ENCODE measurements at regions of chr6 and their contacts with region 1.

Region 1: GRCh38 chr6:70221025-70221714 is 81.7 kb downstream of the COL9A1 start:
- DNase-seq: peak; percentile 12 to 15
- ATAC-seq: peak; percentile 34 to 49; a peak in 3 of 6 replicates
- H3K4me3 ChIP-seq: no peak overlapping the region
- H3K27ac ChIP-seq: no peak overlapping the region
- H3K4me1 ChIP-seq: no peaks in the 10 kb centered on the region
- CTCF ChIP-seq: peak; percentile 68
- EP300 ChIP-seq: no peak
- POLR2A ChIP-seq: no peak
- RAD21 ChIP-seq: peak; percentile 69 to 81

Region 2: GRCh38 chr6:70194421-70194820 is 26.7 kb before region 1 on chr6:
- CTCF ChIA-PET with region 1: no interaction called
- POLR2A ChIA-PET with region 1: no interaction called
- DNase-seq: no peak
- ATAC-seq: no peak
- H3K4me3 ChIP-seq: no peak overlapping the region
- H3K27ac ChIP-seq: no peak overlapping the region
- H3K4me1 ChIP-seq: no peaks in the 10 kb centered on the region
- CTCF ChIP-seq: no peak
- EP300 ChIP-seq: no peak
- POLR2A ChIP-seq: no peak
- RAD21 ChIP-seq: no peak

Region 3: GRCh38 chr6:70210462-70210861 is 10.7 kb before region 1 on chr6:
- CTCF ChIA-PET with region 1: interaction called, 16 read pairs
- POLR2A ChIA-PET with region 1: no interaction called
- DNase-seq: peak; percentile 6 to 16
- ATAC-seq: peak; percentile 66 to 71; a peak in 4 of 6 replicates
- H3K4me3 ChIP-seq: no peak overlapping the region
- H3K27ac ChIP-seq: no peak overlapping the region
- H3K4me1 ChIP-seq: no peaks in the 10 kb centered on the region
- CTCF ChIP-seq: peak; percentile 19; the same call in 1 of the 3 replicates
- EP300 ChIP-seq: no peak
- POLR2A ChIP-seq: no peak
- RAD21 ChIP-seq: 0 out of 5 replicates have a peak, but pooled peaks of 1 of the 2 experiments have one; percentile 5

Region 4: DNA sequence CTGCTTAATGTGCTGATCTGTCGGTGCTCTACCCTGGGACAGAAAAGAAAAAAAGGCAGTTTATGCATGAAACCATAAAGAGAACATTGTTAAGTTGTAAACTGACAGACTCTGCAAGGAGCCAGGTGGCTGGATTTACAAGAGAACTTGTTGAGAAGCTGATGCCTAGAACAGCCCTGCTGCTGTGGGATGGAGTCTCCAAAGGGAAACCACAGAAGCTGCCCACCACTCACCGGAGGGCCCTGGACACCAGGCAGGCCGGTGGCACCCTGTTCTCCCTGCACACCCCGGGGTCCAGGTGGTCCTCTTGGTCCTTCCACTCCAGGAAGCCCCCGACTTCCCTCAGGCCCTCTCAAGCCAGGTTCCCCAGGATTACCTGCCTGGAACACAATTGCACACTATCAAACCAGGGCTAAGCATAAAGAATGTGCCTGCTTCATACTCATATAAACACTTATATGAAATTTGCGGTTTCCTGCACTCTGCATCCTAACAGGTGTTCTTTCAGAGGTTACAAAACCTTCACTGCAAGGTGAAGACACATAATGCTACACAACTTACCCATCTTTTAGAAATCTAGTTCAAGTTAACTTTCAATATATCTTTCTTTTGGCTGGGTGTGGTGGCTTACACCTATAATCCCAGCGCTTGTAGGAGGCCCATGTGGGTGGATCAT is 13.5 kb after region 1 on chr6:
- CTCF ChIA-PET with region 1: interaction called, 34 read pairs
- POLR2A ChIA-PET with region 1: interaction called, 4 read pairs
- DNase-seq: no peak
- ATAC-seq: no peak
- H3K4me3 ChIP-seq: no peak overlapping the region
- H3K27ac ChIP-seq: no peak overlapping the region
- H3K4me1 ChIP-seq: no peaks in the 10 kb centered on the region
- CTCF ChIP-seq: no peak
- EP300 ChIP-seq: no peak
- POLR2A ChIP-seq: no peak
- RAD21 ChIP-seq: no peak

Region 5: GRCh38 chr6:70955441-70956190 is 734.4 kb after region 1 on chr6:
- CTCF ChIA-PET with region 1: interaction called, 14 read pairs
- POLR2A ChIA-PET with region 1: no interaction called
- DNase-seq: peak; percentile 33 to 74
- ATAC-seq: peak; percentile 96 to 98
- H3K4me3 ChIP-seq: peak overlapping the region; percentile 58
- H3K27ac ChIP-seq: peak overlapping the region; percentile 48 to 58; a peak in 4 of 6 replicates
- H3K4me1 ChIP-seq: 0 out of 3 replicates have a peak, but pooled peaks cover 3% of the 10 kb centered on the region
- CTCF ChIP-seq: peak; percentile 69
- EP300 ChIP-seq: no peak
- POLR2A ChIP-seq: no peak
- RAD21 ChIP-seq: peak; percentile 62 to 67

Measured in A549 (cell line).